ENCODE measurements at regions of chr11 and their contacts with region 1.

Region 1: DNA sequence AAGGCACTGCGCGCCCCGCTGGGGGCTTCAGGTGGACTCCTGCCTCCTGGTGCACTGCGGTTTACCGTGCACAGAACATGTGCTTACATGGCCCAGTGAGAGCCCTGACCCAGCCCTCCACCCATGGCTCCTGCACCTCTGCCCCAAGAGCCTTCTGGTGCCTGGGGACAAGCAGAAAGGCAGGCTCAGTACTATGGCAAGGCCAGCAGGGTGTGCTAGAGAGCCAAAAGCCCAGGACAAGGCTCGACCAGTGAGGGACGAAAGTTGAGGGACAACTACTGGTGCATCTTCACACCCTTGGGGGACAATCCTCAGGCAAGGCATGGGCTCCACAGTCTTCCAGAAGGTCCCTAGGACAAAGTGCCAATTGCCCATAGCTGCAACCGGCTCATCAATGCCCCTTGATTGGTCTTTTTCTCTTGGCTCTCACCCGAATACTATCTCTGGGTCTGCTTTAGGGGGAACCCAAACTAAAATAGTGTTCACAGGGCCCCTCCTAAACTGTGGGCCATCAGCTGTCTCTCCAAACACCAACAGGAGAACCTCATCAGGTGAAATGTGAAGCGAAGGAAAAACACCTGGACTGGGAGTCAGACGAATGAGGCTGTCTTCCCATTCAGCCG is 13.5 kb downstream of the PGA5 start:
- DNase-seq: peak; percentile 80 to 88 (median 86)
- ATAC-seq: peak; percentile 97
- H3K4me3 ChIP-seq: no peak overlapping the region
- H3K27ac ChIP-seq: no peak overlapping the region
- H3K4me1 ChIP-seq: peaks cover 0 to 13% of the 10 kb centered on the region in 2 experiments; a peak in 2 of 5 replicates
- H3K27me3 ChIP-seq: peaks cover 3 to 17% of the 10 kb centered on the region in 2 experiments; a peak in 3 of 5 replicates
- CTCF ChIP-seq: peak; percentile 90 to 95 (median 94)
- EP300 ChIP-seq: no peak
- POLR2A ChIP-seq: no peak
- RAD21 ChIP-seq: peak; percentile 79 to 92

Region 2: DNA sequence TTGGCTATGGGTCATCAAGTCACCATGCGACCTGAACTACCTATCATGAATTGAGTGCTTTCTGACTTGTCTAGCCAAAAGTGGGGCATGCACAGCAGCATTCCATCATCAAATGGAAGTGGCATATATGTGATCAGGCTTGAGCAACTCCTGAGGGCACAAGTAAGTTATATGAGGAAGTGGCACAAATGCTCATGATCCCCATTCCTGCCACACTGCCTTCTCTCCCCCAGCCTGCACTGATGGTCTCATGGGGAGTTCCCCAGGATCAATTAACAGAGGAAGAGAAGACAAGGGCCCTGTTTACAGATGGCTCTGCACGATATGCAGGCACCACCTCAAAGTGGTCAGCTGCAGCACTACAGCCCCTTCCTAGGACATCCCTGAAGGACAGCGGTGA is 1033.3 kb before region 1 on chr11:
- CTCF ChIA-PET with region 1: no interaction called
- POLR2A ChIA-PET with region 1: no interaction called
- in situ Hi-C with region 1: no loop called
- intact Hi-C with region 1: no loop called
- DNase-seq: no peak
- ATAC-seq: no peak
- H3K4me3 ChIP-seq: no peak overlapping the region
- H3K27ac ChIP-seq: peak overlapping the region; percentile 48; the same call in 2 of the 3 replicates
- H3K4me1 ChIP-seq: peaks cover 0 to 11% of the 10 kb centered on the region in 2 experiments; a peak in 2 of 5 replicates
- H3K27me3 ChIP-seq: no peaks in the 10 kb centered on the region
- CTCF ChIP-seq: no peak
- EP300 ChIP-seq: no peak
- POLR2A ChIP-seq: no peak
- RAD21 ChIP-seq: no peak

Region 3: DNA sequence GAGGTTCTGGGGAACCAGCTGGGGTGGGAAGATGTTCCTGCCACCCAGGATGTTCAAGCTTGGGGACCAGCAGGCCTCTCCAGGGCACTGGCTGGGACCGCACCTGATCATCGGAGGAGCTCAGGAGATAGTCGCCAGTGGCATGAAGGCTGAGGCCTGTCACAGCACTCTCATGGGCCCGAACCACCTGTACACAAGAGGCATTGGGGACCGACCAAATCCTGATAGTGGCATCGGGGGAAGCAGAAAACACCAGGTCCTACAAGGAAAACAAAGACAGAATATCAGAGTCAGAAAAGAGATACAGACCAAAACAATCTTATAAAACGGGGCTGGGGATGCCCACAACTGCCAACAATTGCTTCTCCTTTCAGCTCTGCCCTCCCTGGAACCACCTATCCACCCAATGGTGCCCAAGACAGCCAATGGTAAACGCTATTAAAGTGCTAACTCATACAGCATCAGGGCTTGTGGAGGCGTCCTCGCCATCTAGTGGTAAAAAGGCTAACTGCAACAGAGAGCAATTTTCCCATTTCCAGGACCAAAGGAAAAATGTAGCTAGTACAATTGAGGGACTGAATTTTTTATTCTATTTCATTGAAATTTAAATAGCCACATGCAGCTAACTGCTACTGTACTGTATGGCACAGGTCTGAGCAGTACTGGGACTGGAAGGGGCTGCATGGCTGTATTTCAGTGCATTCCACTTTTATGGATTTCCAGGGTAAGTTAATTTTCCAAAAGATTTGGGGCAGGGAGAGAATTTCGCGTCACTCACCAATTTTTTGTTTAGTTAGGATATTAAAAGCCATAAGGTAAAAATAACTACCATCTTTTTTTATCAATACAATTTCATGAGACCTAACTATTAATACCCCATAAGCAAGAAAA is 355.2 kb before region 1 on chr11:
- CTCF ChIA-PET with region 1: no interaction called
- POLR2A ChIA-PET with region 1: no interaction called
- in situ Hi-C with region 1: no loop called
- intact Hi-C with region 1: no loop called
- DNase-seq: peak; percentile 53 to 74 (median 60)
- ATAC-seq: peak; percentile 93
- H3K4me3 ChIP-seq: no peak overlapping the region
- H3K27ac ChIP-seq: peak overlapping the region; percentile 35; the same call in 2 of the 3 replicates
- H3K4me1 ChIP-seq: peaks cover 0 to 4% of the 10 kb centered on the region in 2 experiments; a peak in 1 of 5 replicates
- H3K27me3 ChIP-seq: no peaks in the 10 kb centered on the region
- CTCF ChIP-seq: peak; percentile 82 to 94 (median 94)
- EP300 ChIP-seq: no peak
- POLR2A ChIP-seq: no peak
- RAD21 ChIP-seq: peak; percentile 71 to 83

Region 4: DNA sequence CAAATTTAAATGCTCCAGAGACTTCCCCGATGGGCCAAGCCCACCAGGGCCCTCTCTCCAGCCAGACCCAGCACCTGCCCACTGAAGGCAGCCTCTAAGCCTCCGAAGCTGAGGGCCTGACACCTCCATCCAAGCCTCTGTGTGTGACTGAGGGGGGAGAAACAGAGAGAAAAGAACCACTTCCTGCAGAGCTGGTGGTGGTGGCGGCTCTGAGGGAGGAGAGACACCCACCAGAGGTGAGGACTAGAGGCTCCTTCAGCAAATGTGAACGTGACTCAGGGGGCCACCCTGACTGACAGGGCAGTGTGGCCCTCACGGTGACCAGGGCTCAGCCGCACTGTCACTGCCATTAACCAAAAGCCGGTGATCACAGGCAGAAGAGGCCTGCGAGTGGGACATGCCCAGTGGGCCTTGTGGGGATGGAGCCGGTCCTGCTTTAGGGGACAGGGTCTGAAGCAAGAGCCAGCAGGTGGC is 183.3 kb before region 1 on chr11:
- CTCF ChIA-PET with region 1: no interaction called
- POLR2A ChIA-PET with region 1: no interaction called
- in situ Hi-C with region 1: no loop called
- intact Hi-C with region 1: no loop called
- DNase-seq: no peak
- ATAC-seq: peak; percentile 65
- H3K4me3 ChIP-seq: no peak overlapping the region
- H3K27ac ChIP-seq: peak overlapping the region; percentile 55; the same call in 1 of the 3 replicates
- H3K4me1 ChIP-seq: peaks cover 15 to 19% of the 10 kb centered on the region in 2 experiments
- H3K27me3 ChIP-seq: peaks cover 8 to 17% of the 10 kb centered on the region in 2 experiments; a peak in 4 of 5 replicates
- CTCF ChIP-seq: no peak
- EP300 ChIP-seq: no peak
- POLR2A ChIP-seq: no peak
- RAD21 ChIP-seq: no peak

Region 5: DNA sequence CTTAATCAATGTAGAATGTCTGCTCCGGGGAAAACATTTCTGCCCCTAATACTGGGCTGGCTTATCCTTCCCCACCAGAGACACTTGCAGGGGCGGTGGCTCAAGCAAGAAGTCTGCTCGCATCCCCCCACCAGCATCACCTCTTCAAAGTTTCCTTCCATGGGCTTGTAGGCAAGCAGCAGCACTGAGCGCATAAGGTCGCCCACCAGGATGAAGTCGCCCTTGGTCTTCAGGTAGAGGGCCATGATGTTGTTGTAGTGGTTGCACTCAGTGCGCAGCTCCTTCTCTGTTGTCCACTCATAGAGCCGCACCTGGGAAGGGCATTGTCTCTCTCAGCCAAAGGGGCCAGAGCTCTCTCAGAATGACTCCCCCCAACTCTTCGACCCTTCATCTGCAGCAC is 49.2 kb after region 1 on chr11:
- CTCF ChIA-PET with region 1: no interaction called
- POLR2A ChIA-PET with region 1: no interaction called
- in situ Hi-C with region 1: no loop called
- intact Hi-C with region 1: loop called (anchors 5 kb)
- DNase-seq: no peak
- ATAC-seq: no peak
- H3K4me3 ChIP-seq: no peak overlapping the region
- H3K27ac ChIP-seq: no peak overlapping the region
- H3K4me1 ChIP-seq: no peaks in the 10 kb centered on the region
- H3K27me3 ChIP-seq: no peaks in the 10 kb centered on the region
- CTCF ChIP-seq: no peak
- EP300 ChIP-seq: no peak
- POLR2A ChIP-seq: no peak
- RAD21 ChIP-seq: no peak

Measured in K562 (cell line).